Pancreas (tissue), 10 donors: ENCODE measurements at regions of chr3 and their contacts with region 1.

Region 1: GRCh38 chr3:10224784-10225665 is 23.2 kb upstream of the TATDN2 start:
- DNase-seq: peak in 5 of 6 donors; percentile 61 to 84 (median 65)
- ATAC-seq: peak; percentile 92 to 97 (median 95)
- H3K4me3 ChIP-seq: no peak overlapping the region
- H3K27ac ChIP-seq: no peak overlapping the region
- H3K4me1 ChIP-seq: no peaks in the 10 kb centered on the region
- H3K27me3 ChIP-seq: no peaks in the 10 kb centered on the region
- CTCF ChIP-seq: peak; percentile 40 to 74 (median 72)

Region 2: DNA sequence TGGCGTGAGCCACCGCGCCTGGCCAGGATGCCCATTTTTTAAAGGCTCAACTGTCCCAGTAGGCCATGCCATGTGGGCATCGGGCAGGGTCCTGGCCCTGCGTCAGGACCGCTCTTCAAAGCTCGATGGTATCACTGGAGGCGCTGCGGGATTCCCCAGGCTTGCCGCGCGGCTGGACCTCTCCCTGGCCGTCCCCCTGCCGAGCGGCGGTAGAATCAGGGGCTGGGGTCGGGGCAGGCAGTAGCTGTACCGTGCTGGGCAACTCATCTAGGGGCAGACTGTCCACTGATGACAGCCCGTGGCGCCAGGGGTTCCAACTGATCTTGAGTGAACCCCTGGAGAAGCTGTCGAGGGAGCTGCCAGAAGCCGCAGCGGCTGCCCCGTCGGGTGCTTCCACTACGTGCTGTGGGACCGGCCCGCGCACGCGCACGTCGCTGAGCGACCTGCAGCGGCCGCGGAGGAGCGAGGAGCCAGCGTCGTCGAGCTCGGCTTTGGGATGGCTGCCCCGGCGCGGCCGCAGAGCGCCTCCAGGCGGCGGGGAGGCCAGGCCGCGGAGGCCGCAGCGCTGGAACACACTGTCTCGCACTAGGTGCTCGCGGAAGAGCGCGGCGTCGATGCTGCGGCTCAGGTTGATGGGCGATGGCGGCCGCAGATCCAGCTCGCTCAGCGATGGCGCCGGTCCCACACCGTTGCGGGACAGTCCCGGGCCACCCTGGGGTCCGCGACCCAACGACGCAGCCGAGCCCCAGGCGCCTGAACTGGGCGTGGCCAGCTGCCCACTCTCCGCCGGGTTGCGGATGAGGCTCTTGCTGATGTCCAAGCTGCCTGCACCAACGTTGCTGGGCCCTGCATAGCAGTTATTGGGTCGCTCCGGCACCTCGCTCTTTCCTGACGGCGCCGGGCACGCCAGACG is 278.7 kb before region 1 on chr3:
- intact Hi-C with region 1: loop called in 1 of 3 experiments (anchors 10 kb)
- DNase-seq: peak; percentile 87 to 98 (median 94)
- ATAC-seq: peak; percentile 92 to 95 (median 93)
- H3K4me3 ChIP-seq: peak overlapping the region; percentile 23 to 77 (median 56)
- H3K27ac ChIP-seq: peak overlapping the region; percentile 67 to 75 (median 72)
- H3K4me1 ChIP-seq: peaks cover 0 to 5% (median 0%) of the 10 kb centered on the region in 3 donors
- H3K27me3 ChIP-seq: no peaks in the 10 kb centered on the region
- CTCF ChIP-seq: peak; percentile 54 to 73 (median 70)

Region 3: DNA sequence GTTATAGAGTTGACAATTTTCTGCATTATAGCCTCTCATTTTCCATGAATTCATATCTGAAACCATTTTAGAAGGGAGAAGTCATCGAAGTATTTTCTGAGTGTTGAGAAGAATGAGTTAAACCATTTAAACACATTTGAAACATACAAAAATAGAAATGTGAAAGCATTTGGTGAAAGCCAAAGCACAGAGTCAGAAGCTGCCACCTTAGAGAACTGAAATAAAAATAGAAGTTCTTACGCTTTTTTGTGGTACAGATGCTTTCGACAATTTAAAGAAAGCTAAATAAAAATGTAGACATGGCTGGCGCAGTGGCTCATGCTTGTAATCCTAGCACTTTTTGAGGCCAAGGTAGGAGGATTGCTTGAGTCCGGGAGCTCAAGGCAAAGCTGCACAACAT is 126.0 kb before region 1 on chr3:
- intact Hi-C with region 1: no loop called
- DNase-seq: no peak
- ATAC-seq: no peak
- H3K4me3 ChIP-seq: no peak overlapping the region
- H3K27ac ChIP-seq: no peak overlapping the region
- H3K4me1 ChIP-seq: no peaks in the 10 kb centered on the region
- H3K27me3 ChIP-seq: no peaks in the 10 kb centered on the region
- CTCF ChIP-seq: no peak

Region 4: DNA sequence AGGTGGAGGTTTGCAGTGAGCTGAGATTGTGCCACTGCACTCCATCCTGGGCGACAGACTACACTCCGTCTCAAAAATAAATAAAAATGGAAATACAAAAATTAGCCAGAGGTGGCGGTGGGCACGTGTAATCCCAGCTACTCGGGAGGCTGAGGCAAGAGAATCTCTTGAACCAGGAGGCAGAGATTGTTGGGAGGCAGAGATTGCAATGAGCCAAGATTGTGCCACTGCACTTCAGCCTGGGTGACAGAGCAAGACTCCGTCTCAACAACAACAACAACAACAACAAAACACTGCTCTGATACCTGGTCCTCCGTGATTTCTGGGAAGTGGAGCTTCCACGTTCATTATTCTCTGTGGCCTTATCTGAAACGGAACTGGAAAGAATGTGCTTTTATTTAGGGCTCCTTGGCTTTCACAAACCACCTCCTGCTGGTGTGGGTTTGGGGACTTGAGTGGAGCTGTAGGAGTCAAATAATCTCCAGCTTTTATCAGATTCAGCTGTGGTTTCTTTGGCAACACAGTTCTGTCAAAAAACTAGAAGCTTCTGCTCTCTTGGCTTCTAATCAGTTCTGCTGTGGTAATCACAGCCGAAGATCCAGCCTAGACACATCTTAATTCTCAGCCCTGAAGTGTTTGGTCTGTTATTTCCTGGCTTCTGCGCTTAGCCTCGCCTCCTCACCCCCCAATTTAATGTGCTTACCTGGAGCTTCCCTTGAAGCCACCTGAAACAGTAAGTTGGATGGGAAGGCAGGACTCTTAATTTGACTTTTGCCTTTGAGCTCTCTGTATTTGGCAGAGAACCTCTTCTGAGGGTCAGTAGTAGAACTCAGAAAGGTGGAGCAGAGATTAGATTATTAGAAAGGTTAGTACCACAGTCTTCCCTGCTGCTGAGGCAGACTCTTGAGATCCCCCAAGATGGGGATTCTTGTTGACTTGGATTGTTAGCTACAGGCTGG is 38.9 kb before region 1 on chr3:
- intact Hi-C with region 1: no loop called
- DNase-seq: no peak
- ATAC-seq: no peak
- H3K4me3 ChIP-seq: no peak overlapping the region
- H3K27ac ChIP-seq: peak overlapping the region in 2 of 4 donors; percentile 18 to 27
- H3K4me1 ChIP-seq: peaks cover 0 to 24% (median under 1%) of the 10 kb centered on the region in 3 donors
- H3K27me3 ChIP-seq: no peaks in the 10 kb centered on the region
- CTCF ChIP-seq: no peak

Region 5: GRCh38 chr3:10758304-10759061 is 533.5 kb after region 1 on chr3:
- intact Hi-C with region 1: no loop called
- DNase-seq: peak in 5 of 6 donors; percentile 29 to 74 (median 59)
- ATAC-seq: peak; percentile 86 to 98 (median 97)
- H3K4me3 ChIP-seq: no peak overlapping the region
- H3K27ac ChIP-seq: no peak overlapping the region
- H3K4me1 ChIP-seq: no peaks in the 10 kb centered on the region
- H3K27me3 ChIP-seq: peaks cover 0 to 6% (median 0%) of the 10 kb centered on the region in 4 donors
- CTCF ChIP-seq: peak; percentile 36 to 61 (median 54)